Astrocyte of the cerebellum (primary cell): ENCODE measurements at regions of chr10 and their contacts with region 1.

Region 1: DNA sequence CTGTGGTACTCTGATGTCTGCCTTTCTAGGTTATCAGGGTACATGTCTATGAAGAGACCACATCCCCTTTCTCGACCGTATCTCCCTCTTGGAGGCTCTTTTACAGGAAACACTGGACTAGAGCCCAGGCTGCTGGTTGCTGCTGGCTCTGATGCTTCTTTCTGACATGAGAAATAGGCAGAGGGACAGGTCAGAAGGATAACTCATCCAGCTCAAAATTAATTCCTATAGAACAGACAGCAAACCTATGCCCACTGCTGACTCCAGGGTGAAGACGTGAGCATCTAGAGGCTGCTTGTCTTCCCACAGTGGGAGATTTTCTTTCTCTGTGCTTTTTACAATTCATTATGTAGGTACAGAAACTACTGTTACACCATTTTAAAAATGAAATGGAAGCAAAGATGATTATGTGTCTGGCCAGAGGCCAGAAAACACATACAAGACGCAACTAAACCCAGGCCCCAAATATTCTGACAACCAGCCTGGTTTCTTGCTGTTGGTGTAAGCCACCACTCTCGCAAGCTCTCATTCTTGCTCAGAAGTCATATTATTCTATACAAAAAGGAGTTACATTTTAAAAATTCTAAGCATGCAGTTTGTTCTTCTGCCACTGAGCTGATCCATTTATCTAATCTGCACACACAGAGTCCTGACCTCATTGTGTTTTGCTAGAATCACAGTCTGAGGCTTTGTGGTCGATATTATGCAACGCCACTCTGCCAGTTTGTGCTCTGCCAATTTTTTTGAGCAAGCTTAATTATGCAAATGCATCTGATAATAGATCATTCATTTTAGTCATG is 424.3 kb downstream of the KIF20B start:
- DNase-seq: peak; percentile 29
- H3K4me3 ChIP-seq: no peak overlapping the region
- CTCF ChIP-seq: peak; percentile 30

Region 2: GRCh38 chr10:89966211-89966610 is 159.4 kb before region 1 on chr10:
- in situ Hi-C with region 1: loop called (anchors 5 kb)
- DNase-seq: no peak
- H3K4me3 ChIP-seq: no peak overlapping the region
- CTCF ChIP-seq: no peak

Region 3: GRCh38 chr10:90167174-90168064 is 41.8 kb after region 1 on chr10:
- in situ Hi-C with region 1: loop called (anchors 5 kb)
- DNase-seq: no peak
- H3K4me3 ChIP-seq: no peak overlapping the region
- CTCF ChIP-seq: no peak